ENCODE measurements at regions of chr1 and their contacts with region 1.

Region 1: DNA sequence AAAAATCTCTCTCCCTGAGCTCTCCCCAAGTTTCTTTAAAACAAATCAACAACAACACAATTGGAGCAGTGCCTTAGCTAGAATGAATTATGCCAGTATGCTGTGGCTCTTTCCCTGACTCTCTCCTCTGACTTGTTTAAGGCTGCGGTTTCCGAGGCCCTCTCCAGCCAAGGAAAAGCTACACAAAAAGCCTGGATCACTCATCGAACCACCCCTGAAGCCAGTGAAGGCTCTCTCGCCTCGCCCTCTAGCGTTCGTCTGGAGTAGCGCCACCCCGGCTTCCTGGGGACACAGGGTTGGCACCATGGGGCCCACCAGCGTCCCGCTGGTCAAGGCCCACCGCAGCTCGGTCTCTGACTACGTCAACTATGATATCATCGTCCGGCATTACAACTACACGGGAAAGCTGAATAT is 1.9 kb downstream of the S1PR1 start:
- DNase-seq: peak; percentile 74 to 88 (median 83)
- ATAC-seq: peak; percentile 67
- H3K4me3 ChIP-seq: peak overlapping the region; percentile 88
- H3K4me3 Mint-ChIP-seq: peak overlapping the region; percentile 90 to 100 (median 98)
- H3K27ac ChIP-seq: peak overlapping the region; percentile 94
- H3K27ac Mint-ChIP-seq: peak overlapping the region; percentile 93 to 100 (median 99)
- H3K4me1 ChIP-seq: peaks cover 37 to 42% of the 10 kb centered on the region in 2 donors
- H3K4me1 Mint-ChIP-seq: peaks cover 43 to 68% (median 56%) of the 10 kb centered on the region in 7 donors
- H3K27me3 ChIP-seq: no peaks in the 10 kb centered on the region
- H3K27me3 Mint-ChIP-seq: peaks cover 0 to 4% (median 0%) of the 10 kb centered on the region in 5 donors

Region 2: GRCh38 chr1:100351095-100351891 is 887.4 kb before region 1 on chr1:
- CTCF ChIA-PET with region 1: no interaction called
- POLR2A ChIA-PET with region 1: no interaction called
- intact Hi-C with region 1: loop called in 1 of 2 experiments (anchors 5 kb)
- DNase-seq: peak; percentile 73 to 91 (median 85)
- ATAC-seq: peak; percentile 82
- H3K4me3 ChIP-seq: peak overlapping the region; percentile 94
- H3K4me3 Mint-ChIP-seq: peak overlapping the region; percentile 89 to 100 (median 98)
- H3K27ac ChIP-seq: peak overlapping the region; percentile 89
- H3K27ac Mint-ChIP-seq: peak overlapping the region; percentile 95 to 100 (median 98)
- H3K4me1 ChIP-seq: peaks cover 10 to 19% of the 10 kb centered on the region in 2 donors
- H3K4me1 Mint-ChIP-seq: peaks cover 23 to 35% (median 26%) of the 10 kb centered on the region in 7 donors
- H3K27me3 ChIP-seq: no peaks in the 10 kb centered on the region
- H3K27me3 Mint-ChIP-seq: peaks cover 0 to under 1% (median 0%) of the 10 kb centered on the region in 5 donors

Region 3: GRCh38 chr1:100882692-100883091 is 356.0 kb before region 1 on chr1:
- CTCF ChIA-PET with region 1: no interaction called
- POLR2A ChIA-PET with region 1: no interaction called
- intact Hi-C with region 1: no loop called
- DNase-seq: no peak
- ATAC-seq: peak; percentile 56
- H3K4me3 ChIP-seq: no peak overlapping the region
- H3K4me3 Mint-ChIP-seq: no peak overlapping the region
- H3K27ac ChIP-seq: no peak overlapping the region
- H3K27ac Mint-ChIP-seq: no peak overlapping the region
- H3K4me1 ChIP-seq: no peaks in the 10 kb centered on the region
- H3K4me1 Mint-ChIP-seq: no peaks in the 10 kb centered on the region
- H3K27me3 ChIP-seq: no peaks in the 10 kb centered on the region
- H3K27me3 Mint-ChIP-seq: peaks cover 0 to 5% (median 0%) of the 10 kb centered on the region in 5 donors

Region 4: DNA sequence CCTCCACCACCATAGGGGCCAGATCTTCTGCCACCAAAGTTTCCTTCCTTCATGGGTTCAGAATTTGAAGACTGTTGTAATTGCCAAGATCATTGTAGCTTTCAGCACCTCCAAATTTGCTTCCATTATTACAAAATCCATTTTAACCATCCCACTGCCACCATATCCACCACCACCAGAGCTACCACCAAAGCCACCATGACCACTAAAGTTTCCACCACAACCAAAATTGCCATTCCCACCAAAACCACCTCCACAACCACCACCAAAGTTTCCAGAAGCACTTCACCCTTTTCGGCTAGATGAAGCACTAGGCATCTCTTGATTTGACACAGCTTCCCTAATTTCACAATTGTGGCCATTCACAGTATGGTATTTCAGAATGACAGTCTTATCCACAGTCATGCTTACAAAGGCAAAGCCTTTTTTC is 297.6 kb before region 1 on chr1:
- CTCF ChIA-PET with region 1: interaction called, 7 read pairs
- POLR2A ChIA-PET with region 1: interaction called, 46 read pairs
- intact Hi-C with region 1: no loop called
- DNase-seq: peak in 1 of 9 donors; percentile 56
- ATAC-seq: no peak
- H3K4me3 ChIP-seq: no peak overlapping the region
- H3K4me3 Mint-ChIP-seq: peak overlapping the region; percentile 61 to 82 (median 72)
- H3K27ac ChIP-seq: no peak overlapping the region
- H3K27ac Mint-ChIP-seq: peak overlapping the region; percentile 87 to 99 (median 95)
- H3K4me1 ChIP-seq: peaks cover 5 to 35% of the 10 kb centered on the region in 2 donors
- H3K4me1 Mint-ChIP-seq: peaks cover 38 to 75% (median 69%) of the 10 kb centered on the region in 7 donors
- H3K27me3 ChIP-seq: no peaks in the 10 kb centered on the region
- H3K27me3 Mint-ChIP-seq: peaks cover 0 to 2% (median 0%) of the 10 kb centered on the region in 5 donors

Region 5: DNA sequence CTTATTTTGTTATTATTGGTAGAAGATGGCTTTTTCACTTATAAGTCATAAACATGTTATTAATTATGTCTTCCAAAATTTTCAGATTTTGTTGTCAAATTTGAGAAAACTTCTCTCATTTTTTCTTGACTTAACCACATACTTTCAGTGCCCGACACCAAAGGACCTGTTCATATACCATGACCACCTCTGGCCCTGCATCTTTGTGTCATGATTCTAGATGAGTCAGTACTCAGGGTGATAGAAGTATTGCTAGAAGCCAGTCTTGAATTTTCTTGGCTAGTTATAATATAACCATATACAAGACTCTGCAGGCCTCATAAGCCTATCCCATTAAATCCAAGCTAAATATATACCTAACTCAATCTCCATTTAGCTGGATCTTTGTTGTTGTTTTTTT is 177.7 kb before region 1 on chr1:
- CTCF ChIA-PET with region 1: no interaction called
- POLR2A ChIA-PET with region 1: interaction called, 5 read pairs
- intact Hi-C with region 1: loop called in 1 of 2 experiments (anchors 5 kb)
- DNase-seq: no peak
- ATAC-seq: no peak
- H3K4me3 ChIP-seq: no peak overlapping the region
- H3K4me3 Mint-ChIP-seq: no peak overlapping the region
- H3K27ac ChIP-seq: no peak overlapping the region
- H3K27ac Mint-ChIP-seq: peak overlapping the region in 1 of 9 donors; percentile 68
- H3K4me1 ChIP-seq: peaks cover 0 to 12% of the 10 kb centered on the region in 2 donors
- H3K4me1 Mint-ChIP-seq: peaks cover 12 to 50% (median 39%) of the 10 kb centered on the region in 7 donors
- H3K27me3 ChIP-seq: no peaks in the 10 kb centered on the region
- H3K27me3 Mint-ChIP-seq: no peaks in the 10 kb centered on the region

Region 6: DNA sequence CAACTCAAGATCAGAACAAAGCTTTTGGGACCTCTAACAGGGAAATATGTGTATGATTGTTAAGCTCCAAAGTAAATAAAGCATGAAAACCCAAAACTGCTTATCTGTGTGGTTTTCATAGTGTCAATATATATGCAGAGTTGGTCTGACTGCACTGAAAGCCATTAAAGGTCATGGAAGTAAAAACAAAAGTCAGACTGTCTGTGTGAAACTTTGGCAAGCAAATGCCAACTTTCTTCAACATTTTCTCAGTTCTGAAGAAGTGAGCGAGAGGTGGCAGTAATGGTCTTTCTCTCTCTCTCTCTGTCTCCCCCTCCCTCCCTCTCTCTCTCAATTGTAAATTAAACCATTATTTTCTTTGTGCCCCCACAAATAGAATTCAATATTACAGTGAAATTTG is 101.9 kb before region 1 on chr1:
- CTCF ChIA-PET with region 1: interaction called, 11 read pairs
- POLR2A ChIA-PET with region 1: interaction called, 136 read pairs
- intact Hi-C with region 1: loop called (anchors 1 kb)
- DNase-seq: peak in 7 of 9 donors; percentile 11 to 59 (median 45)
- ATAC-seq: peak; percentile 77
- H3K4me3 ChIP-seq: no peak overlapping the region
- H3K4me3 Mint-ChIP-seq: peak overlapping the region in 9 of 10 donors; percentile 23 to 62 (median 49)
- H3K27ac ChIP-seq: peak overlapping the region; percentile 19
- H3K27ac Mint-ChIP-seq: peak overlapping the region; percentile 67 to 93 (median 85)
- H3K4me1 ChIP-seq: peaks cover 17 to 32% of the 10 kb centered on the region in 2 donors
- H3K4me1 Mint-ChIP-seq: peaks cover 37 to 67% (median 66%) of the 10 kb centered on the region in 7 donors
- H3K27me3 ChIP-seq: no peaks in the 10 kb centered on the region
- H3K27me3 Mint-ChIP-seq: no peaks in the 10 kb centered on the region

Region 7: GRCh38 chr1:101262630-101263348 is 24.1 kb after region 1 on chr1:
- CTCF ChIA-PET with region 1: interaction called, 23 read pairs
- POLR2A ChIA-PET with region 1: interaction called, 101 read pairs
- intact Hi-C with region 1: loop called (anchors 1 to 2 kb)
- DNase-seq: peak in 7 of 9 donors; percentile 38 to 71 (median 63)
- ATAC-seq: peak; percentile 60
- H3K4me3 ChIP-seq: peak overlapping the region; percentile 31
- H3K4me3 Mint-ChIP-seq: peak overlapping the region; percentile 76 to 88 (median 82)
- H3K27ac ChIP-seq: peak overlapping the region; percentile 37
- H3K27ac Mint-ChIP-seq: peak overlapping the region; percentile 79 to 97 (median 90)
- H3K4me1 ChIP-seq: peaks cover 87 to 91% of the 10 kb centered on the region in 2 donors
- H3K4me1 Mint-ChIP-seq: peaks cover 68 to 96% (median 85%) of the 10 kb centered on the region in 7 donors
- H3K27me3 ChIP-seq: no peaks in the 10 kb centered on the region
- H3K27me3 Mint-ChIP-seq: no peaks in the 10 kb centered on the region

Region 8: DNA sequence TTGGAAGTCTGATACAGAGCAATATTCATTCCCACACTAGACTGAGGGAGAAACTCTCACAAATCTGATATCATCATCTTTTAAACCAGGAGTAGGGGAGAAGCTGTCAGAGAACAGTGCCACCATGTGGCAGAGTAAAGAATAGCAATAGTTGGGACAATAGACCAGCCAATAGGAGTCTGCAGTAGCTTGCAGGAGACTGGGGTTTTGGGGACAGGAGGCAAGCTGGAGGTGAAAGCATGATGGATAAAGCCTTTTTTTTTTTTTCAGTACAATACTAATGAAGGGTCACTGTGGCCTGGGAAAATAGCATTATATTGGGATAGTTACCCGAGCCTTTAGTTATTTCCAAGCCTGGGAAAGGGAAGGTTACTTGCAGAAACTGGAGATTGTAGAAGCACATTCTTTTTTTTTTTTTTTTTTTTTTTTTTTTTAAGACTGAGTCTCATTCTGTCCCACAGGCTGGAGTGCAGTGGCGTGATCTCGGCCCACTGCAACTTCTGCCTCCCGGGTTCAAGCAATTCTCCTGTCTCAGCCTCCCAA is 118.8 kb after region 1 on chr1:
- CTCF ChIA-PET with region 1: interaction called, 7 read pairs
- POLR2A ChIA-PET with region 1: interaction called, 4 read pairs
- intact Hi-C with region 1: loop called (anchors 1 to 2 kb)
- DNase-seq: peak; percentile 26 to 90 (median 85)
- ATAC-seq: peak; percentile 100
- H3K4me3 ChIP-seq: no peak overlapping the region
- H3K4me3 Mint-ChIP-seq: peak overlapping the region in 3 of 10 donors; percentile 1 to 84 (median 60)
- H3K27ac ChIP-seq: no peak overlapping the region
- H3K27ac Mint-ChIP-seq: peak overlapping the region in 8 of 9 donors; percentile 42 to 97 (median 80)
- H3K4me1 ChIP-seq: peaks cover 6 to 7% of the 10 kb centered on the region in 2 donors
- H3K4me1 Mint-ChIP-seq: peaks cover 5 to 12% (median 9%) of the 10 kb centered on the region in 7 donors
- H3K27me3 ChIP-seq: no peaks in the 10 kb centered on the region
- H3K27me3 Mint-ChIP-seq: peaks cover 0 to 19% (median 0%) of the 10 kb centered on the region in 5 donors

Region 9: GRCh38 chr1:101410048-101410878 is 171.6 kb after region 1 on chr1:
- CTCF ChIA-PET with region 1: no interaction called
- POLR2A ChIA-PET with region 1: no interaction called
- intact Hi-C with region 1: no loop called
- DNase-seq: no peak
- ATAC-seq: no peak
- H3K4me3 ChIP-seq: no peak overlapping the region
- H3K4me3 Mint-ChIP-seq: no peak overlapping the region
- H3K27ac ChIP-seq: no peak overlapping the region
- H3K27ac Mint-ChIP-seq: no peak overlapping the region
- H3K4me1 ChIP-seq: no peaks in the 10 kb centered on the region
- H3K4me1 Mint-ChIP-seq: peaks cover 0 to 5% (median 0%) of the 10 kb centered on the region in 7 donors
- H3K27me3 ChIP-seq: no peaks in the 10 kb centered on the region
- H3K27me3 Mint-ChIP-seq: peaks cover 0 to 44% (median 4%) of the 10 kb centered on the region in 5 donors